Astrocyte of the cerebellum (primary cell): ENCODE measurements at regions of chr1 and their contacts with region 1.

Region 1: DNA sequence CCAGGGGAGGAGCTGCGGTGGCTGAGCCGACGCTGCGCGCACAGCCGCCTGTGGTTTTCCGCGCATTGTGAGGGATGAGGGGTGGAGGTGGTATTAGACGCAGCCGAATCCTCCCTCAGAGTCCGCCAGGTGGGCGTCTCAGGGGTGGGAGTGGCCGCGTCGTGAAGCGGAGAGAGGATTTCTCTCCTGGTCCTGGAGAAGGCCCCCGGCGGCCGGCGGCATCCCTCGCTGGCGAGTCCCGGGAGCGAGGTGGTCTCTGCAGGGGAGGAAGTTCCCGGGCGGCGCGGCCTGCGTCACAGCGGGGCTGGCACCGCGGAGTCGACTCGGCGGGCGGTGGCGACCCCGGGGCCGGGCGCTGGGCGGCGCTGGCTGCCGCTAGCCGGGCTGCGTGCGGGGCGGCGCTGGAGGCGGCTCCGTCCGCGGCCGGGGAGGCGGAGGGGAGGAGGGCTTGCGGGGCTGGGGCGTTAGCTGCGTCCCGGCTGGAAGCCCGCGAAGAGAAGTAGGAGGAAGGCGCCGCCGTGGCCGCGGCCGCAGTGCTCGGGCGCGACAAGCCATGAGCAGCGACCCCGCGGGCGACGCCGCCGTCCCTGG is at the start of gene LRRC8C:
- DNase-seq: no peak
- H3K4me3 ChIP-seq: peak within 1 kb of the TSS; percentile 72
- CTCF ChIP-seq: peak; percentile 2

Region 2: DNA sequence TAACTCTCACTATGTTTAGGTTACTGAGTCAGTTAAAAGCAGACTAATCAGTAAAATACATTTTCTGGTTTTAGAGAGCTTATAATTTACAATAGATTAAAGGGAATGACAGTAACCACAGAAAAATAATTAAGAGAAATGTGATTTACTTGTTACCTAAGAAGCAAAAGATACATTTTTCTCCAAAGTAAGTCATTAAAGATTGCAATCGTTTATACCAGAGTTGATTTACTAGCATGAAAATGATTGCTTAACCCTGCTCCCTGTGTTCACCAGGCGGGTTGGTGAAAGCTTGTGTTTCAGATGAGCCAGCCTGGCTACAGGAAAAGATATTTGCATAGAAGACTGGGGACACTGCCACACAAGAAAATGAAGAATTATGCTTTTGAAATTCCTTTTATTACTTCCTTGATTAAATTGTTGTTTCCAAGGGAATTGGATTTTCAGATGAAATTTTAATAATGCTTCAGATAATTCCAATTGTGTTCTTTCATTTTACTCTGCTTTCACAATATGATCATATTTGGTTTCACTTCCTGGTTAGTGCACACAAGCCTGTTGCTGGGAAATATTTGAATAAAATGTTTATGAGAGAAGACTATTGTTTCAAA is 80.2 kb before region 1 on chr1:
- in situ Hi-C with region 1: no loop called
- DNase-seq: no peak
- H3K4me3 ChIP-seq: no peak overlapping the region
- CTCF ChIP-seq: no peak

Region 3: DNA sequence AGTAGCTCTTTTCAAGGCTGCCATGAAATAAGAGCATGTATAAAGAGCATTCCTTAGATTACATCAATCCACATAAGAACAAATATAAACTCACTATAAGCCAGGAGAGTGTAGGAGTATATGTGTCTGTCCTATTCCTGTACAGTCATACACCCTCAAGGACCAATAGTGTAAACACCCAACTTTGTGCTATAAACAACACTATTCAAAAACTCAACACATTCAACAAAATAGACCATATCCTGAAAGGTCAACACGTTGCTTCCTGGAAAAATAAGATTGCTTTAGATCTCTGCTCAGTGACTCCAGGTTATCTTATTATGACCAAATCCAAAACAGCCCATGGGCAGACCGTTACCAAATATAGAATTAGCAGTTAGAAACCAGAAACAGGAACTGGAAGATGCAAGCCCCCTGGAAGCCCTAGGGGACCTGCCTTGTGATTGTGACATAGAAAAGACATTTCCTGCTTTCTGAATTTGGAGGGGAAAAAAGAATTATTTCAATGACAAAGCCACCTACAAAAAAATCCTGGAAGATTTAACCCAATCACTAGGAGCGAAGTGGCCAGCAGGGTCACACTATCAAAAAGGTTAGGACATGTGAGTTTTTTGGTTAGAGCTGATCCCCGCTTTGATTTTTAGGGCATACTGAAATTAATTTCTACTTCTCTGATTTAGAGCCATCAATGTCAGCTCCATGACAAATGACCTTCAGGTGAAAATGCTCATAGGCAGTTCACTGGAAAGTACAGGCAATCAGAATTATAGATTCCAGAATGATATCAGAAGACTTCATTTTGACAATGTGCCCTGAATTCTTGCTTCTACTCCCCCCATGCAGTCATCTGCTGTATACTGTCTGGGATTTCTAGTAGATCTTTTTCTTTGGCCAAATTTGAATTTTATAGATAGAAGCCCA is 60.1 kb after region 1 on chr1:
- in situ Hi-C with region 1: no loop called
- DNase-seq: no peak
- H3K4me3 ChIP-seq: no peak overlapping the region
- CTCF ChIP-seq: no peak

Region 4: DNA sequence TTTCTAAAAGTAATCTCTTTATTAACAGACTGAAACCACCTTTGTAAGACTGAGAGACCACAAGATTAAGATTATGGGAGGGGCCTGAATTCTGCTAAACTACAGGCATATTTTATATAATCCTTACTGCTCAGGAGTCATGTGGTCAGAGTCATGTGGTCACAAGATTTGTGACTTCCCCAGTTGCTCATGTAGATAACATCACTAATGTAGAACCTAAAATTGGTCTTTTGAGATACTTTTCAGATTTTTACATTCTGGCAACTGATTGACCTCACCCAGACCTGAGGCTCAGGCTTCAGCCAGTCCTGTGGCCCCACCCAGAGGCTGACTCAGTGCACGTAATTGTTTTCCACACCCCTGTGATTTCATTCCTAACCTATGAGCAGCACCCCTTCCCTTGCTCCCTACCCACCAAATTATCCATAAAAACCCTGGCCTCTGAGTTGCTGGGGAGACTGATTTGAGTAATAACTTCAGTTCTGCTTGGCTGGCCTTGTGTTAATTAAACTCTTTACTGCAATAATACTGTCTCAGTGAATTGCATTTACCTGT is 320.4 kb after region 1 on chr1:
- in situ Hi-C with region 1: loop called (anchors 25 kb)
- DNase-seq: peak; percentile 62
- H3K4me3 ChIP-seq: no peak overlapping the region
- CTCF ChIP-seq: peak; percentile 14